T-cell (primary cell): ENCODE measurements at regions of chr20 and their contacts with region 1.

Region 1: DNA sequence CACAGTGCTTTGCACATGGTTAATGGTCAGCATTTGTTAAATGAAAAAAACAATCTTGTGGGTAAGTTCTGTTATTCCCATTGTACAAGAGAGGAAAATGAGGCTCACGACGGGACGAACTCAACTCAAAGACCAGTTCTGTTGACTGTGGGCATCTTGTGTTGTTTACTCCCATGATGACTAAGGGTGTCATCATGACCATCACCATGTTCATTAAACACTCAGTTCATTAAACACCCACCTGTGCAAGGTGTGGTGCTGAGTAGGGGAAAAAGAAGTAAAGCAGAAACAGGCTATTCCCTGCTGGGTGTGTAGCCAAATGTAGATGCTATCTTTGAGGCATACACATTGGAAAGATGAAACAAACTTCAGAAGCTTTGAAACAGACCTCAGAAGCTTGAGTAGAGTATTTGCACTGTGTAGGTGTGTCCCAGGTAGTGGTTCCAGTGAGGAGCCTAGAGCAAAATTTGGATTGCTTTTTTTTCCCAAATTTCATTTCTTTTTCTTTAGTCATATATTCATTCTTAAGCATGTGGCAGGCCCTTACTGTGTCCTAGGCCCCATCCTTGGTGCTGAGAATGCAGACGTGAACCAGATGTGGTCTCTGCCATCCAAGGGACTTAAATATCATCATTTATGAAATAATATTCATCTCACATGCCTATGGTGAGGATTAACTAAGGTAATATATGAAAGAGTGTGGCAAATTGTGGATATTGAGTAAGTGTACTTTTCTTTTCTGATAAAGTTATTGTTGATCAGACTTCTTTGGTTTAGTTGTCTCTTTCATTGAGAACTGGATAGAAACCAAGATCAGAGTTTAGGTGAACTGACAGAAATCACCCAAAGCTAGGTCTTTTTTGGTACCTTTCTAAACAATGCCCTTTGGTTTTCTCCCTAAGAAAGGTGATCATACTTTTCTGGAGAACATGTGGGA is 4.8 kb downstream of the CHMP4B start:
- DNase-seq: no peak
- ATAC-seq: no peak
- H3K4me3 ChIP-seq: no peak overlapping the region
- H3K4me3 Mint-ChIP-seq: no peak overlapping the region
- H3K27ac ChIP-seq: no peak overlapping the region
- H3K27ac Mint-ChIP-seq: no peak overlapping the region
- H3K4me1 ChIP-seq: peaks cover 24 to 43% of the 10 kb centered on the region in 2 experiments
- H3K4me1 Mint-ChIP-seq: peaks cover 81 to 87% (median 85%) of the 10 kb centered on the region in 3 donors
- H3K27me3 ChIP-seq: no peaks in the 10 kb centered on the region
- H3K27me3 Mint-ChIP-seq: no peaks in the 10 kb centered on the region

Region 2: GRCh38 chr20:34111702-34112599 is 296.0 kb after region 1 on chr20 and contains the start of gene EIF2S2:
- CTCF ChIA-PET with region 1: interaction called in 1 of 2 experiments, 5 read pairs
- POLR2A ChIA-PET with region 1: interaction called, 7 to 11 read pairs
- DNase-seq: peak; percentile 86 to 99 (median 95)
- ATAC-seq: peak; percentile 85 to 92 (median 90)
- H3K4me3 ChIP-seq: peak within 1 kb of the TSS; percentile 90 to 98
- H3K4me3 Mint-ChIP-seq: peak within 1 kb of the TSS; percentile 95 to 97 (median 96)
- H3K27ac ChIP-seq: peak within 1 kb of the TSS; percentile 87
- H3K27ac Mint-ChIP-seq: peak within 1 kb of the TSS; percentile 96 to 99
- H3K4me1 ChIP-seq: peaks cover 8 to 31% of the 10 kb centered on the region in 2 experiments
- H3K4me1 Mint-ChIP-seq: peaks cover 44 to 49% (median 48%) of the 10 kb centered on the region in 3 donors
- H3K27me3 ChIP-seq: no peaks in the 10 kb centered on the region
- H3K27me3 Mint-ChIP-seq: no peaks in the 10 kb centered on the region
- total RNA-seq, gene EIF2S2: 20.6 to 54.7 (median 48.9) TPM